ENCODE measurements at regions of chr5 and their contacts with region 1.

Region 1: DNA sequence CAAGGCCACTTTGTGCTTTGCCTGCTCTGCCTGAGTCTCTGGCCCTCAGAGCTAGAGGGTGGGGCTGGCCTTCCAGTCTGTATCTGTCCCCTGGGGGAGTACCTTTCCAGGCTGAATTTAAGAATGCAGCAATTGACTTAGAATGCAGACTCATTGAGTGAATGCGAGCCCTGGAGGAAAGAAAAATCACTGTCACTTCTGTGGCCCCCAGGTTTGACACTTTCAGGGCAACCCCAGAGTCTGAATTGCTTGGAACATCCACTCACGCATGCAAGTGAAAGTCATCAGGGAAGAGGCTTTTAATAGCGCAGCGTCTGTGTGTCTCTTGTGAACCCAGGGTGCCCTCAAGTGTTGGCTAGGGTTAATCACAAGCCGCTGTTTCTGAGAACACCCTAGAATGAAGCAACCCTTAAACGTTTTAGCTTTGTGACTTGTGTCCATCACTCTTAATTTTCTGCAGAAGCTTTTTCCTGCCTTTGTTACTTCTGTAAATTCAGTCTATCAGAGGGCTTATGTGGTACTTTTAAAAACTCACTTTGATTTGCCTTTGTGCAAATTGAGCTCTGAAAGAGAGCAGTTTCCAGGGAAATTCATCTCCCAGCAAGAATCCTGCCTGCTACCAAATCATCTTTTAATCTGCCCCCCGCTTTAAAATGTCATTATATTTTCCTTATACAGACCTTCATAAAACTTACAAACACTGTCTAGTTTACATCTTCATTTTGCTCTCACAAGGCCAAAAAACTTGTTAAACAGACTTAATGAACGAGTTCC is 146.8 kb upstream of the IQGAP2 start:
- DNase-seq: peak; percentile 62
- H3K4me3 ChIP-seq: no peak overlapping the region
- H3K27ac ChIP-seq: no peak overlapping the region
- H3K4me1 ChIP-seq: no peaks in the 10 kb centered on the region
- H3K27me3 ChIP-seq: peaks cover 8% of the 10 kb centered on the region
- CTCF ChIP-seq: peak; percentile 72 to 83

Region 2: GRCh38 chr5:74934949-74935751 is 1321.2 kb before region 1 on chr5:
- CTCF ChIA-PET with region 1: no interaction called
- dilution Hi-C with region 1: no loop called
- in situ Hi-C with region 1: no loop called
- intact Hi-C with region 1: loop called (anchors 5 kb)
- DNase-seq: peak; percentile 59
- H3K4me3 ChIP-seq: no peak overlapping the region
- H3K27ac ChIP-seq: no peak overlapping the region
- H3K4me1 ChIP-seq: no peaks in the 10 kb centered on the region
- H3K27me3 ChIP-seq: no peaks in the 10 kb centered on the region
- CTCF ChIP-seq: peak; percentile 36 to 52

Region 3: DNA sequence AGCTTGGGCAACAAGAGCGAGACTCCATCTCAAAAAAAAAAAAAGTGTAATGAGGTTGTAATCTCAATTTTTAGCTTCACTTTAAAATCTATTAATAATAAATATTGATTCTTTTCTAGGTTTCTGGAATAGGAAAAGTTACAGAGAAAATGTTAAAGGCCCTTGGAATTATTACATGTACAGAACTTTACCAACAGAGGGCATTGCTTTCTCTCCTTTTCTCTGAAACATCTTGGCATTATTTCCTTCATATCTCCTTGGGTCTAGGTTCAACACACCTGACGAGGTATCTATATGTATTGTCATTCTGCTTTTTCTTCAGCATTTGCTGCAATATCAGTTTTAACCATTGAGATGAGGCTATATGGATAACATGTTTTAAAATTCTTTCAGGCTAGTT is 671.7 kb before region 1 on chr5:
- CTCF ChIA-PET with region 1: no interaction called
- dilution Hi-C with region 1: no loop called
- in situ Hi-C with region 1: no loop called
- intact Hi-C with region 1: loop called (anchors 5 kb)
- DNase-seq: no peak
- H3K4me3 ChIP-seq: no peak overlapping the region
- H3K27ac ChIP-seq: no peak overlapping the region
- H3K4me1 ChIP-seq: no peaks in the 10 kb centered on the region
- H3K27me3 ChIP-seq: no peaks in the 10 kb centered on the region
- CTCF ChIP-seq: peak; percentile 9 to 44

Region 4: DNA sequence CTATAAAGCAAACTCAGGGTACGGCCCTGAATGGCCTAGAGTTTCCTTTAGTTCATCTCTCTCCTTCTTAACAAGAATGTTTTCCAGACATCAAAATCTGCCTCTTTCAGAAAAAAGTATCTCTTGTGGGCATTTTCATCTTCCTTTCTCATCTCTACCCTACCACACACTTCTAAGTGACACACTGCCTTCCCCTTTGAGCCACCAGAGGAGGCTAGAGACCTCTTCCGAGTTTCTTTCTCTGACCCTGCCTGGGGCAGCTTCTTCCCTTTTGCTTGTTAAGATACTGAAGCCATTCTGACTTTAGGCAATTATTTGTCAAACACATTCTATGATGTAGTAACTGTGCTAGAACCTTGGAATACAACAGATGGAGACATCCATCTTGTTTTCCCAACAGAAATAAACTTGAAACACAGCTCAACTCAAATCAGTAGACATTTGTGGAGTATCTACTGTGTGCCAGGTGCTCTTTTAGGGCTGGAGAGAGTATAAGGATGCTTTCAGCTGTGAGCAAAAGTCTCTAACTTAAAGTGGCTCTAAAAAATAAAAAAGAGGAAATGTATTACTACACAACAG is 181.7 kb before region 1 on chr5:
- CTCF ChIA-PET with region 1: no interaction called
- dilution Hi-C with region 1: no loop called
- in situ Hi-C with region 1: no loop called
- intact Hi-C with region 1: loop called (anchors 10 kb)
- DNase-seq: no peak
- H3K4me3 ChIP-seq: no peak overlapping the region
- H3K27ac ChIP-seq: no peak overlapping the region
- H3K4me1 ChIP-seq: no peaks in the 10 kb centered on the region
- H3K27me3 ChIP-seq: peaks cover 7% of the 10 kb centered on the region
- CTCF ChIP-seq: peak; percentile 27 to 57

Region 5: DNA sequence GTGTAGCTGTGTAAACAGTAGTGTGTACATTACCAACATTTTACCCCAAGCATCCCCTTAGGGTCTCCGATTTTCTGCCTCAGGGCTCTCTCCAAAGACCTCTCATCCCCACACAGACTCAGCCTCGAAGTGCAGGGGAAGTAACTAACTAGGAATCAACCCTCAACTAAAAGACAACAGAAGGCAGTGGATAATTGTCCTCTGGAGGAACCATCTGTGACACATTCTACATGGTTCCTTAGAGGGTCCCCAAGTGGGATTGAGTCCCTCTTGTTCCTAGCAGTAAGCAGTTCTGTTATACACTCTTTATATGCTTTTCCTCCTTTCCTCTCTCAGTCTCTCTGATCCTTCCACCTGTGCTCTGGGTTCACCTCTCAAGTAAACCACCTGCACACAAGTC is 16.0 kb before region 1 on chr5:
- CTCF ChIA-PET with region 1: no interaction called
- dilution Hi-C with region 1: no loop called
- in situ Hi-C with region 1: no loop called
- intact Hi-C with region 1: no loop called
- DNase-seq: no peak
- H3K4me3 ChIP-seq: no peak overlapping the region
- H3K27ac ChIP-seq: no peak overlapping the region
- H3K4me1 ChIP-seq: no peaks in the 10 kb centered on the region
- H3K27me3 ChIP-seq: peaks cover 6% of the 10 kb centered on the region
- CTCF ChIP-seq: no peak